Left ventricle myocardium superior (tissue), 1 donor: ENCODE measurements at regions of chr10 and their contacts with region 1.

Region 1: DNA sequence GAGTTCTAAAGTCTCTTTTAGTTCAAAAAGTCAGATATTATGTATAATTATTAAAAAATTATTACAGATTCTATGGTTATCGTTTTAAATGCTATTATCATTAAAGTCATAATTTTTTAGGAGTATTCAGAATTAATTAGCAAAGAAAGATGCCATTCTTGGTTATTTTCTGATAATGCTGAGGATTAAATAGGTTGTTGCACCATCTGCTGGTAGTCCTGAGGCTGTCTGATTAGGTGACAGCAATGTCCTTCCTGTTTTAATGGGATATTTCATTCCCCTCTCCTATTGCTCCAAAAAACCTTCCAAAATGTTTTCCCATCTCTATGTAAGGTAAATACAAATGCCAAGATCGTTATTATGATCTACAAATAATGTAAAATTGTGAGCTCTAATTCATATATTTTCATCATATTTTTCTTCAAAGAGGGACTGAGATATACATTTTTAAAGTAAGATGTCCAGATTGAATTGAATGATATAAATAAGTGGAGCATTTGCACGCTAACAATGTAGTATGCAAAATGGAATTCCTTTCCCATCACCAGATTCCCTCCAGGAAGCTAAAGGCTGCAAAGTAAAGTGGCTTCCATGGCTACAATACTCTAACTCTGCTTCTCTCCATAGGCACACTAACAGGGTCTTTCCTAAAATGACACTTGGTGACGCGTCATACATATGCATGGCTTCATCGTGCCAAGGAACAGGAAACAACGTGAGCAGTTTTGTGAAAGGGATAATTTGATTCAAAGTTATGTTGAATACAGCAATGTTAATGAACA is 58.8 kb upstream of the AKR1E2 start:
- DNase-seq: no peak
- ATAC-seq: peak; percentile 75

Region 2: GRCh38 chr10:3197348-3198003 is 1569.7 kb before region 1 on chr10:
- intact Hi-C with region 1: loop called (anchors 2 kb)
- DNase-seq: peak; percentile 89
- ATAC-seq: peak; percentile 96

Region 3: DNA sequence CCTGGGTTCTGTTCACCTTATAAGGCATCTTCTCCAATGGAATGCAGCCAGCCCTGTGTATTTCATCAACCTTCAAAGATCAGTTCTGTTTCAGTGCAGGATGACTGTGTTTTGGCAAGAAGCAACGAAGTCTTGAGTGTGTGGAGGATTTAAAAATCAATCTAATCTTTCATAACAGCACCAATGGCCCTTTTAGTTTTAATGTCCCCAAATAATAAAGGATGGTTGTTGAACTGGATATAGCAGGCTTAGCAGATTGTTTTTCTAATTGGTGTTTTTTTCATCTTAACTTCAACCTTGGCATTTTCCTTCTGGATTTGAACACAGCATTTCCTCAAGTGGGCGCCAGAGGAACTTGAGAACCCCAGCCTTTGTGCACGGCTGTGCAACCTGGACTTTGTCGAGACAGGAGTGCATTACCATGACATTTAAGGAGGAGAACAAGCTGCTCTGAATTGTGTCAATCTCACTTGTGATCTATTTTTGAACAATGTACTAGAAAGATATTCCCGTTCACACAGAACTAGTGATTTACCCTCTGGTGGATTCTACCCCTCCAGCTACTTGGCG is 254.5 kb before region 1 on chr10:
- intact Hi-C with region 1: loop called (anchors 2 kb)
- DNase-seq: peak; percentile 66
- ATAC-seq: peak; percentile 81

Region 4: GRCh38 chr10:4663162-4663904 is 103.9 kb before region 1 on chr10:
- intact Hi-C with region 1: loop called (anchors 5 kb)
- DNase-seq: no peak
- ATAC-seq: peak; percentile 89

Region 5: DNA sequence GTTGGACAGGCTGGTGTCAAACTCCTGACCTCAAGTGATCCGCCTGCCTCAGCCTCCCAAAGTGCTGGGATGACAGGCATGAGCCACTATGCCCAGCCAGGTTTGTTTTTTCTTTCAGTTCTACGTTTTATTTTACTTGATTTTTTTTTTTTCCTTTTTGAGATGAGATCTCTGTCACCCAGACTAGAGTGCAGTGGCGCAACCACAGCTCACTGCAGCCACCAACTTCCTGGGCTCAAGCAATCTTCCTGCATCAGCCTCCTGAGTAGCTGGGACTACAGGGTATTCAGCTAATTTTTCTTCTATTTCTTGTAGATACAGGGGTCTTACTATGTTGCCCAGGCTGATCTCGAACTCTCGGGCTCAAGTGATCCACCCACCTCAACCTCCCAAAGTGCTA is 1021.7 kb after region 1 on chr10:
- intact Hi-C with region 1: no loop called
- DNase-seq: no peak
- ATAC-seq: no peak